Sigmoid colon (tissue), 7 donors: ENCODE measurements at regions of chr12 and their contacts with region 1.

Region 1: GRCh38 chr12:49866859-49867579 is 24.1 kb upstream of the BCDIN3D start:
- DNase-seq: peak; percentile 85
- H3K4me3 ChIP-seq: no peak overlapping the region
- H3K27ac ChIP-seq: no peak overlapping the region
- H3K4me1 ChIP-seq: peaks cover 0 to 29% (median 27%) of the 10 kb centered on the region in 4 donors
- H3K27me3 ChIP-seq: peaks cover 0 to 4% (median 0%) of the 10 kb centered on the region in 3 donors
- CTCF ChIP-seq: peak; percentile 81 to 97 (median 94)
- EP300 ChIP-seq: no peak
- POLR2A ChIP-seq: no peak

Region 2: GRCh38 chr12:49827401-49828099 is 39.5 kb before region 1 on chr12:
- intact Hi-C with region 1: no loop called
- DNase-seq: peak; percentile 84
- H3K4me3 ChIP-seq: peak overlapping the region; percentile 92 to 99 (median 94)
- H3K27ac ChIP-seq: peak overlapping the region; percentile 95 to 99 (median 97)
- H3K4me1 ChIP-seq: peaks cover 0 to 49% (median 47%) of the 10 kb centered on the region in 4 donors
- H3K27me3 ChIP-seq: no peaks in the 10 kb centered on the region
- CTCF ChIP-seq: no peak
- EP300 ChIP-seq: no peak
- POLR2A ChIP-seq: no peak

Region 3: GRCh38 chr12:49903695-49904423 is 36.8 kb after region 1 on chr12 and contains the start of gene FAIM2:
- intact Hi-C with region 1: loop called (anchors 2 kb)
- DNase-seq: peak; percentile 82
- H3K4me3 ChIP-seq: peak within 1 kb of the TSS; percentile 15 to 53 (median 38)
- H3K27ac ChIP-seq: peak within 1 kb of the TSS; percentile 45 to 64 (median 48)
- H3K4me1 ChIP-seq: peaks cover 0 to 19% (median 9%) of the 10 kb centered on the region in 4 donors
- H3K27me3 ChIP-seq: peaks cover 0 to 2% (median 0%) of the 10 kb centered on the region in 3 donors
- CTCF ChIP-seq: no peak
- EP300 ChIP-seq: no peak
- POLR2A ChIP-seq: no peak
- total RNA-seq, gene FAIM2: 5.8 to 12.8 (median 7.5) TPM

Region 4: GRCh38 chr12:49945394-49946080 is 78.5 kb after region 1 on chr12:
- intact Hi-C with region 1: loop called (anchors 5 kb)
- DNase-seq: peak; percentile 88
- H3K4me3 ChIP-seq: peak overlapping the region in 3 of 4 donors; percentile 16 to 34 (median 24)
- H3K27ac ChIP-seq: peak overlapping the region in 2 of 4 donors; percentile 23 to 40
- H3K4me1 ChIP-seq: peaks cover 0 to 9% (median 8%) of the 10 kb centered on the region in 4 donors
- H3K27me3 ChIP-seq: no peaks in the 10 kb centered on the region
- CTCF ChIP-seq: peak; percentile 38 to 88 (median 72)
- EP300 ChIP-seq: no peak
- POLR2A ChIP-seq: no peak

Region 5: GRCh38 chr12:50043854-50044253 is 176.8 kb after region 1 on chr12:
- intact Hi-C with region 1: loop called (anchors 10 kb)
- DNase-seq: no peak
- H3K4me3 ChIP-seq: no peak overlapping the region
- H3K27ac ChIP-seq: no peak overlapping the region
- H3K4me1 ChIP-seq: no peaks in the 10 kb centered on the region
- H3K27me3 ChIP-seq: no peaks in the 10 kb centered on the region
- CTCF ChIP-seq: no peak
- EP300 ChIP-seq: no peak
- POLR2A ChIP-seq: no peak

Region 6: DNA sequence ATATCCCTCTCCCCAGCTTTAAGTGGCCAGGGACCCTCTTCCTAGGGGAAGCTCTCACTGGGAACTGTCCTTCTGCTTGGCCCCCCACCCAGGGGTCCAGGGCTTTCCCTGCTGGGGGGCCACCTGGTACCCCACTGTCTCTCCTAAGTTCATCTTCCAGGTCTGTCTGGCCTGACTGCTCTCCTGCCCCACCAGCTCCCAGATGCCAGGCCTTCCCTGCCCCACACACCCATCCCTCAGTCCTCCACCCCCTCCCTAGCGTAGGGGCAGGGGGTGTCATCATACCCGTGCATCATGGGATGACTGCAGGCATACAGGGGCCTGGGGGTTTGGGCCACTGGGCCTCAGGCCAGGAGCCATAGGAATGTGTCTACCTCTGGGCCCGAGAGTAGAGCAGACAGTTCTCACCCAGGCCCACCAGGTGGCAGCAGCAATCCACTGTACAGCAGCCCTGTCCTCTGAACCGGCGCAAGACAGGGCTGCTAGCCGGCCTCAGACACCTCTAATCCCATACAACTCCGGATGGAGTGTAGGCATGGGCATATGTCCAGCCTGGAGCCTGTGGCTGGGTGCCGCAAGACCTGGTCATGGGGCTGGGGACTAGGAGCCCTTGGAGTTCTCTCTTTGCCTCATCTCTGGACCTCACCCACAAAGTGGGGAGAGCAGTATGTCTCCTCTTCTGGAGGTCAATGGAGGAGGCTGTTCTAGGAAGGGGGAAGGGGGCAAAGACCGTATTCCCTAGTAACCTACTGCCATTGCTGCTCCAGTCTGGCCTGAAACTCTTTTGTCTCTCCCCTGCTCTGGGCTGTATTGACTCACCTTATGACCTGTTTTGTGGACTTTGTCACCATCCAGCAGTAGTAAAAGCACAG is 208.2 kb after region 1 on chr12:
- intact Hi-C with region 1: loop called (anchors 10 kb)
- DNase-seq: peak; percentile 91
- H3K4me3 ChIP-seq: no peak overlapping the region
- H3K27ac ChIP-seq: no peak overlapping the region
- H3K4me1 ChIP-seq: peaks cover 0 to 13% (median 10%) of the 10 kb centered on the region in 4 donors
- H3K27me3 ChIP-seq: no peaks in the 10 kb centered on the region
- CTCF ChIP-seq: peak; percentile 88 to 93 (median 90)
- EP300 ChIP-seq: no peak
- POLR2A ChIP-seq: no peak